Posterior vena cava (tissue), 2 donors: ENCODE measurements at regions of chr13 and their contacts with region 1.

Region 1: DNA sequence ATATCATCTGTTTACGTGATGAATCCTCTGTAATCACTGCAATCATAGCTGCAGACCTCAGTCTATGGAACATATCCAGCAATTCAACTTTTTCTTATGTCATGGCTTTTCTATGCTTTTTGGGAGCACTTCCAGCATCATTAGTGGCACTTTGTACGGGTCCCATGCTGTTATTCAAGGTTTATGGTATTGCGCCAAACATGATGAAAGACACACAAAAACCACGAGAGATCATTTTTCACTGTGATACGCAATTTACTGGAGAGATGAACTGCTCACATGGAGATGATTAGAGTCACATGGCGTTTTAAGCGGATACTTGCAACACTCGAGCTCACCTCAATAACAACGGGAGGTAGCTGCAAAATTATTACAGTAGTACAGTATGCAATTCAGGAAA is 2101.7 kb upstream of the PCDH20 start:
- DNase-seq: no peak

Region 2: DNA sequence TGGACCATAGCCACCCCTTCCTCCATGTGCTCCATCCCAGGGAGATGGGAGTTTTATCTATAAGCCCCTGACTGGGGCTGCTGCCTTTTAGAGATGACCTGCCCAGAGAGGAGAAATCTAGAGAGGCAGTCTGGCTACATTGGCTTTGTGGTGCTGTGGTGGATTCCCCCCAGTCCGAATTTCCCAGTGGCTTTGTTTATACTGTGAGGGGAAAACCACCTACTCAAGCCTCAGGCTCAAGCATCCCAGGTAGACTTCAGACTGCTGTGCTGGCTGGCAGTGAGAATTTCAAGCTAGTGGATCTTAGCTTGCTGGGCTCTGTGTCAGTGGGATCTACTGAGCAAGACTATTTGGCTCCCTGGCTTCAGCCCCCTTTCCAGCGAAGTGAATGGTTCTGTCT is 906.0 kb before region 1 on chr13:
- intact Hi-C with region 1: no loop called
- DNase-seq: no peak

Region 3: GRCh38 chr13:63497601-63498000 is 19.8 kb before region 1 on chr13:
- intact Hi-C with region 1: loop called in 1 of 2 experiments (anchors 2 kb)
- DNase-seq: no peak

Region 4: GRCh38 chr13:64362564-64362963 is 845.2 kb after region 1 on chr13:
- intact Hi-C with region 1: no loop called
- DNase-seq: no peak